ENCODE measurements at regions of chr13 and their contacts with region 1.

Region 1: DNA sequence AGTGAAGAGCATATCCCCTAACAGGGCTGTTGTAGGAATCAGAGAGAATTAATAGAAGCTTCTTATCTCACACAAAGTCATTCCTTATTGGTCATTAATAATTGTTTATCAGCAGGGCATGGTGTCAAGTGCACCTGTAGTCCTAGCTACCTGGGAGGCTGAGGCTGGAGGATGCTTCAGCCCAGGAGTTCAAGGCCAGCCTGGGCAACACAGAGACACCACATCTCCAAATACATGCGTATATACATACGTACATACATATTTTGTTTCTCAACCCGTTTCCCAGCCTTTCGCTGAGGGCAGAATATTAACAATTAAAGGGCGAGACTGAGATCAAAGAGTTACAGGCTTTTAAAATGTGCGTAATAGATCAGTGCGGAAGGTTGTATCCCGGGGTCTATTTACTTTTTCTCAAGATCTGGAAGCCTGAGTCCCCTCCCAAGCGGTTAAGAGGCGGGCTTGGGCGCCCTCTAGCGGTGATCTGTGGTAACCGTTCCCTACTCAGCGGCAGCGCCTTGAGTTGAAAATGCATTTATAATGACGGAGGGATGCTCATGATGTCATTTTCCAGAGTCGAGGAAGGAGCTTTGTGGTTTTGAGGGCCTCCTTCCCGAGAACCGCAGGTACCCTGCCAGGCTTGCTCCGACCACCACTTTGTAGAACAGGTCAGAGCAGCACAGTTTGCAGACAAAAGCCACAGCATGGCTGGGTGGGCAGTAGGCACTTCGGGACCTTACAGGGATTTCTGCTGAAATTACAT is 169.6 kb upstream of the GPR12 start:
- DNase-seq: no peak
- H3K4me3 ChIP-seq: no peak overlapping the region
- H3K27ac ChIP-seq: no peak overlapping the region
- H3K4me1 ChIP-seq: peaks cover 0 to 5% (median 0%) of the 10 kb centered on the region in 3 donors
- H3K27me3 ChIP-seq: peaks cover 0 to 3% (median 0%) of the 10 kb centered on the region in 4 donors
- CTCF ChIP-seq: peak; percentile 37 to 94 (median 76)
- POLR2A ChIP-seq: no peak

Region 2: DNA sequence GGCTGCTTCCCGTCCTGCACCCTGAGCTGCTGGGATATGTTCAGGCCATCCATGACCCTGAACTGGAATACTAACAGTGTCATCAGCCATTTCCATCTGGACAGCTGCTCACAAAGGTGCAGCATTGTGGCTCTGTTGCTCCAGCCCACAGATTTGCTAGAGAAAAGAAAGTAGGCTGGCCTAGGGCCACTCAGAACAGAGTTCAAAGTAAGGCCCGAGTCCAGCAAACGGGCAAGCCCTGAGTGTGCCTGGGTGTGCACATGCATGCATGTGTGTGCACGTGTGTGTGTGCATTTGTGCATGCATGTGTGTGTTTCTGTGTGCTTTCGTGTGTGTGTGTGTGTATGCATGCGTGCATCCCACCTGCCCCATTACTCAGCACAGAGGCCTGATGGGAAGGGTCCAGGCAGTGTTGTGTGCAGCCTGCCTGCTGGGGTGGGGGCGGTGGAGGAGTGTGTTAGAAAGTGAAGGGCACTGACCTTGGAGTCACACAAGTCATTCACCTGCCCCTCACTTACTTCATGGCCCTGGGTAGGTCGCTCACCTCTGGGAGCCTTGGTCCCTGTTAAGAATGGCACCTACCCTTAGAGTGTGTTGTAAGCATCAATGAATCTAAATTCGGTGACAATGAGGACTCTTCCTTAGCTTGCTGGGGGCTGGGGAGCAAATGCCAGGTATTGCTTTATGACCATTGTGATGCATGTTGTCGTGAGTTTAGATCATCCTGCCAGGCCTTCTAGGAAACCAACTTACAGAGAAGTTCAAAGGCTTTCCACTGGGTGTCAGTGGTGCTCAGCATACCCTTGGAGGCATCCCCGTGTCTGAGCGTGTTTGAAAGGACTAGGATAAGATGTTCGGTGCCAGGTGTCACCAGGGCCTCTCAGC is 222.8 kb before region 1 on chr13:
- intact Hi-C with region 1: loop called (anchors 10 kb)
- DNase-seq: no peak
- H3K4me3 ChIP-seq: no peak overlapping the region
- H3K27ac ChIP-seq: no peak overlapping the region
- H3K4me1 ChIP-seq: no peaks in the 10 kb centered on the region
- H3K27me3 ChIP-seq: peaks cover 0 to 4% (median 0%) of the 10 kb centered on the region in 4 donors
- CTCF ChIP-seq: peak in 5 of 6 experiments; percentile 22 to 70 (median 35)
- POLR2A ChIP-seq: no peak

Region 3: GRCh38 chr13:27889471-27889870 is 959.3 kb after region 1 on chr13:
- intact Hi-C with region 1: no loop called
- DNase-seq: no peak
- H3K4me3 ChIP-seq: no peak overlapping the region
- H3K27ac ChIP-seq: no peak overlapping the region
- H3K4me1 ChIP-seq: no peaks in the 10 kb centered on the region
- H3K27me3 ChIP-seq: peaks cover 0 to 38% (median 0%) of the 10 kb centered on the region in 4 donors
- CTCF ChIP-seq: no peak
- POLR2A ChIP-seq: no peak